Activated CD4-positive, alpha-beta memory T cell treated with anti-CD3 and anti-CD28 coated beads, Interleukin-2, amount 10 ng/mL, durations not matched to agents 7 days and 5 days (primary cell): ENCODE measurements at regions of chr15 and their contacts with region 1.

Region 1: DNA sequence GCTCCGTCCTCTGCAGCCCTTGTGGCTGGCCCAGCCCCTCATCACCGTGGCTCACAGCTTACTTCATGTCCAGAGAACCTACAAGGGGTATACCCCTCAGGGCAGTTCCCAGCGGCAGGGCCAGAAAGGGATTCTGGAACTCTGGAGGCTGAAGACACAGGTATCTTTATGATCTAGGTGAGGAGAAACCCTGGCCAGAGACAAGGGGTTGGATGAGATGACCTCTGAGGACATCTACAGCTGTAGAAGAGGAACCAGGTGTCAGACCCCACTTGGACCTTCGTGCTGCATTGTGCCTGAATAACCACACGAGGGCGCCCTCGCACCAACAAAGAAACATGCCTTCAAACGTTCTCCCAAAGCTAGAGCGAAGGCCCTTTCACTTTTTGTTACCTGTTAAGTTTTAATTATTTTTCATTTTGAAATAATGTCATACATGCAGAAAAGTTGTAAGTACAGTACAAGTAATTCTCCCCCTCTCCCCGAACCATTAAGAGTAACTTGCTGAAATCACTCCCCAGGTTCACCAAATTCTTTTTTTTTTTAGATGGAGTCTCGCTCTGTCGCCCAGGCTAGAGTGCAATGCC is 118.7 kb upstream of the SMAD3 start:
- DNase-seq: peak; percentile 79
- H3K4me3 Mint-ChIP-seq: no peak overlapping the region
- H3K27ac Mint-ChIP-seq: no peak overlapping the region
- H3K4me1 Mint-ChIP-seq: peaks cover 25% of the 10 kb centered on the region
- H3K27me3 Mint-ChIP-seq: peaks cover 10% of the 10 kb centered on the region

Region 2: GRCh38 chr15:66981771-66982170 is 35.1 kb after region 1 on chr15:
- CTCF ChIA-PET with region 1: no interaction called
- POLR2A ChIA-PET with region 1: no interaction called
- DNase-seq: no peak
- H3K4me3 Mint-ChIP-seq: no peak overlapping the region
- H3K27ac Mint-ChIP-seq: no peak overlapping the region
- H3K4me1 Mint-ChIP-seq: peaks cover 2% of the 10 kb centered on the region
- H3K27me3 Mint-ChIP-seq: peaks cover 37% of the 10 kb centered on the region

Region 3: DNA sequence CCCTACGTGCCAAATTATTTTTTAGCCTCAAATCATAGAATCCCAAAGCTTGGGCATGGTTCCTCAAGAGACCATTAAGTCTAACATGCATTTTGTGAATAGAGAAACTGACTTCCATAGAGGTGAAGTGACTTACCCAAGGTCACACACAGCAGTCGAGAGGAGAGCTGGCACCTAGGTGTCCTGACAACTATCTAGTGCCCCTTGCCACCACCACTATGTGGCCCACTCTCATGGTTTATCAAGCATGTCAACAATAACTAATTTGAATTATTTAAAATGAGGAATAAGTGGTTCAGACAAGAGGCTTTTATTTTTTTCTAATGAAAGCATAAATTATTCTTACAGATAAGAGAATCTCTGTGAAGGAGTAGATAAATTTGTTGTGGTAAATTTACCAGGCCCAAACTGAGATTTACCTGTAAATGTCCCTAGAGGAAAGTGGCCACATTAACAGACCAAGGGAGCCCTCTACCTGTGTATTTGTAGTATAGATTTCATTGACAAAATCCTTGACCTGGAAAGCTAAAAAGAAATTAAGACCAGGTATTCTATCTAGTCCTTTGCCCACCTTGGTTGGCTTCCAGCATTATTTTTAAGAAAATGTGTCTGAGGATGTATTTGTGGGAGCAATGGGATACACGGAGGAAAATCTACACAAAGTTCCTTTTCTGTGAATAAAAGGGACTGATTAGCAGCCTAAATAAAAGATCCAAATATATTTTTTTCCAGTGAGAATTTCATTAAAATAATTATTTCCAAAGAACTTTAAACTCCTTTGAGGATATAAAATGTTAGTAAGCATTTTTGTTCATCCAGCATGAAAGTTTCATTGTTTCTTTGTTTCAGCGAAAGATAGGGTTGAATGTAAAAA is 357.1 kb after region 1 on chr15:
- CTCF ChIA-PET with region 1: interaction called, 33 read pairs
- POLR2A ChIA-PET with region 1: interaction called, 3 read pairs
- DNase-seq: no peak
- H3K4me3 Mint-ChIP-seq: no peak overlapping the region
- H3K27ac Mint-ChIP-seq: no peak overlapping the region
- H3K4me1 Mint-ChIP-seq: peaks cover 6% of the 10 kb centered on the region
- H3K27me3 Mint-ChIP-seq: peaks cover 13% of the 10 kb centered on the region

Region 4: DNA sequence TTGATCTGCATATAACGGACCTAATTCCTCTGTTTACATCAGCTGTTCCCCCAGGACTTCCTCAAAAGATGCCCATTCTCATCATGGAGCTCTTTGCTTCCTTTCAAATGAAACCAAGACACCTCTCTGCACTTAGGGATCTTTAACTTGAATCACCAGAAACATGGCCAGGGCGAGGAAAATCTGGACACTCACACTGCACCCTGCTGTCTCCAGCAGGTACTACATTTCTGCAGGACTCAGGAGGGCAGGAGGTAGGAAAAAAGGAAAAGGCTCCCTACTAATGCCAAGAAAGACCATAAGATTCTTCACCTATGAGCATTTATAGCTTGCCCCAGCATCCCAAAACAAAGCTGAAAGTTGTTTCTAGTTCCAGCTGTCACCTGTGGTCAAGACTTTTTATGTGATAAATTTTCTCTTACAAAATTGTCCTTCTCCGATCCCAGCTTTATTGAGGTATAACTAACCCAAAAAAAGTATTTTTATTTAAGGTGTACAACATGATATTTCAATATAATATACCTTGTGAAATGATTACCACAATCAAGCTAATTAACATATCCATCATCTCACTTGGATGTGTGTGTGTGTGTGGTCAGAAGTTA is 486.9 kb after region 1 on chr15:
- CTCF ChIA-PET with region 1: interaction called, 19 read pairs
- POLR2A ChIA-PET with region 1: no interaction called
- DNase-seq: peak; percentile 41
- H3K4me3 Mint-ChIP-seq: no peak overlapping the region
- H3K27ac Mint-ChIP-seq: no peak overlapping the region
- H3K4me1 Mint-ChIP-seq: no peaks in the 10 kb centered on the region
- H3K27me3 Mint-ChIP-seq: no peaks in the 10 kb centered on the region